ENCODE measurements at regions of chr11 and their contacts with region 1.

Region 1: GRCh38 chr11:110786226-110786902 is 74.1 kb upstream of the ARHGAP20 start:
- DNase-seq: no peak
- H3K4me3 ChIP-seq: no peak overlapping the region
- H3K27ac ChIP-seq: no peak overlapping the region
- H3K4me1 ChIP-seq: no peaks in the 10 kb centered on the region
- H3K27me3 ChIP-seq: no peaks in the 10 kb centered on the region
- CTCF ChIP-seq: no peak

Region 2: DNA sequence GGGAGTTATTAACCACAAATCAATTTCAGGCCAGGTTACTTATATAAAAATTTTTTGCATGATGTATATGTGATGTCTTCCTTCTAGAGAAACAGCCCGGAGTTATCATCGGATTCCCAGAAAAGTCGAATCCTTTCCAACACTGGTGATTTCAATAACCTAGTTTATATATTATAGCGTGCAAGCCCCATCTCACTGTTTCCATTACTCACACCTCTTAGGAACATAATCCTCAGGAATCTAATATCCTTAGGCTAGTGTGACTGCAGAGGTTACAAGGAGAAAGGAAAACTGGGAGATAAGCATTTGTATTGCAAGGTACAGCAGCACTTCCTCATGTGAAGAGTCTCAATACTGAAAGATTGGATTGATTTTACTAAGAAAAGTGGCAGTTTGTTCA is 94.4 kb before region 1 on chr11:
- CTCF ChIA-PET with region 1: no interaction called
- POLR2A ChIA-PET with region 1: interaction called, 10 read pairs
- intact Hi-C with region 1: no loop called
- DNase-seq: no peak
- H3K4me3 ChIP-seq: no peak overlapping the region
- H3K27ac ChIP-seq: no peak overlapping the region
- H3K4me1 ChIP-seq: no peaks in the 10 kb centered on the region
- H3K27me3 ChIP-seq: no peaks in the 10 kb centered on the region
- CTCF ChIP-seq: no peak